Endothelial cell of umbilical vein (primary cell): ENCODE measurements at regions of chr2 and their contacts with region 1.

Region 1: DNA sequence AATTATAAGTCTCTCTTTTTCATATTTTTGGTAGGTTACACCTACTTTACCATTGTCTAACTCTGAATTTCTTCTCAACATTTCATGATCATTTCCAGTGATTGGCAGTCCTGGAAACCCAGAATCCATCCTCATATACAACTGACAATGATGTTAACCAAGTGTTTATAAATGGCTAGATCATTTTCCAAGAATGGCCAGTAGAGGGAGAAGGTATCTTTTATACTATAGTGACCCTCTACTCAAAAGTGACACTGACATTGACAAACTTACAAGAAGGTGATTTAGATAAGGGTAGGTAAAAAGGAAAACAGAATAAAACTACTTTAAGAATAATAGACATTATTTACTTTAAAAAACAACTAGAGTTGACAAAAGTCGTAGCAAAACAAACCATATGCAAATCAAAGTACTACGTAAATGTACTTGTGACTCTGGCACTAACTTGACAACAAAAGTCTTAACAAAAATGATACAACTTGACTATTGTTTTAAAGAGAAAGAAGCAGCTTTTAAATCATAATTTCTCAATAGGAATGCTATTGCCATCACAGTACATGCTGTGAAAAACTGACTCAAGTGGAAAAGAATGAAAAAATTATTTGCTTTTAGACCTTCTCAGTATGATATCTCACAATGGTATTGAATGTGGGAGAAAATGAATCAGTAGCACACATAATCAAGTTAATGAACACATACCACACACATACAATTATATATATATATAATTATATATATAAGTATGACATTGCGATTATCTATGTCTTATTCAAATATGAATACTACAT is 76.6 kb upstream of the GRB14 start:
- DNase-seq: peak; percentile 51
- H3K4me3 ChIP-seq: no peak overlapping the region
- H3K27ac ChIP-seq: no peak overlapping the region
- H3K4me1 ChIP-seq: peaks cover 4% of the 10 kb centered on the region
- H3K27me3 ChIP-seq: no peaks in the 10 kb centered on the region
- CTCF ChIP-seq: peak; percentile 16 to 42
- POLR2A ChIP-seq: no peak

Region 2: DNA sequence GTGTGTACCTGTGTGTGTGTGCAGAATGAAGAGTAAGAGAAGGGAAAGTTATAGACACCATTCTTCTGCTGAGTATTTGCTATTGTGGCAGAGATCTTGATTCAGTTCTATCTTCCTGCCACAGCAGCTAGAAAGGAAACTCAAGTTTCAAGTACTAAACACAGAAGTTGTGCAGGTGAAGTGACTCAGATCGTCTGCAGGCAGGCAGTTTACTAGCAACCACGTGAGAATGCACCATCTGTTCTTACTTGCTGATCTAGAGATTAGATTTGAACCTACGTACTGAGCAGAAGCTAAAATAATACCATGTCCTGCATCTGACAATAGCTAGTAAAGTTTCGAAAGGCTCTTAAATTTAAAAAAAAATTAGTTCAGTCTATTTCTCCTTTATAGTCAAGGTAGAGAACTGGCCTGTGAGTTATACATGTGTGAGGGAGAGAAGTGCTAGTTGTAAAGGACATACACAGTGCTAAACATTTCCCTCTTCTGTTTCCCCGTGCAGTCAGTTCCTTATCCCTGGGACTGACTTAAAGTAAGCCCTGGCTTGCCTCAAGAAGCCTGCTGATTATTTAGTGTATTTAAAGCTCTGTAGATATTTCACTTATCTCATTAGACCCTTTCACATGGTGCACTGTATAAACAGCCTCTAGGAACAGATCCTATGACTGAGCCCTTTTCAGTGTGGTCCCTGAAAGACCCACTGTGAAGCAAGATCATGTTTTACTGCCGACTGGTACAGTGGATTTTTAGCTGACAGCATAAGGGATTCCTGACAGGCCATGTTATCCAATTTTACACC is 212.4 kb after region 1 on chr2:
- CTCF ChIA-PET with region 1: no interaction called
- POLR2A ChIA-PET with region 1: no interaction called
- dilution Hi-C with region 1: no loop called
- intact Hi-C with region 1: loop called (anchors 1 kb)
- DNase-seq: peak; percentile 88
- H3K4me3 ChIP-seq: no peak overlapping the region
- H3K27ac ChIP-seq: peak overlapping the region; percentile 38
- H3K4me1 ChIP-seq: peaks cover 45% of the 10 kb centered on the region
- H3K27me3 ChIP-seq: no peaks in the 10 kb centered on the region
- CTCF ChIP-seq: no peak
- POLR2A ChIP-seq: no peak